Activated naive CD4-positive, alpha-beta T cell treated with anti-CD3 and anti-CD28 coated beads for 36 hours (primary cell): ENCODE measurements at regions of chr2 and their contacts with region 1.

Region 1: DNA sequence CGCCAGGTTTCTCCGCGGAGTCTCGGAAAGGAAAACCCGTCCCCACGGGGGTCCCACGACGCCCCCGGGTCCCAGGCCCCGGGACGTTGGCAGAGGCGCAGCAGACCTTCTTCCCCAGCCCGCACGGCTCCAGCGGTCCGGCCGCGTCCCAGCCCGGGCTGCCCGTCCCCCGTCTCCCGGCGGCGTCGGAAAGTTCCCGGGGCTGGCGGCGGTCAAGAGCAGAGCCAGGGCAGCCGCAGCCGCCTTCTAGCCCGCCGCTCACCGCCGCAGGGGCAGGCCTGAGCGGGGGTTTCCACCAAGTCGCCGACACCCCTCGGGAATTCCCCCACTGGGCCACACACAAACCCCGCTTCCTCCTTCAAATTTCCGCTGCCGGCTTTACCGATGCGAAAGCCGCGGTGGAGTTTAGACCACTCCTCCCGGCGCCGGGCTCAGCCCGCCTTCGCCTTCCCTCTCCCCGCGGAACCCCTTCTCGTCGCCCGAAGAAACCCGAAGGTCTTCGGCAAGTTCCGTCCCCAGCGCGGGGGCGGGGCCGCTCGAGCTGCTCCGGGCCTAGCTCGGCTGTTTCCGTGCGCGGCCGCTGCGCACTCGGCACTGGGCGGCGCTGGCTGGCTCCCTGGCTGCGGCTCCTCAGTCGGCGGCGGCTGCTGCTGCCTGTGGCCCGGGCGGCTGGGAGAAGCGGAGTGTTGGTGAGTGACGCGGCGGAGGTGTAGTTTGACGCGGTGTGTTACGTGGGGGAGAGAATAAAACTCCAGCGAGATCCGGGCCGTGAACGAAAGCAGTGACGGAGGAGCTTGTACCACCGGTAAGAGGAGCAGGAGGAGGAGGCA is at the start of gene CREB1:
- DNase-seq: peak; percentile 100
- H3K4me3 Mint-ChIP-seq: peak within 1 kb of the TSS; percentile 98
- H3K27ac Mint-ChIP-seq: peak within 1 kb of the TSS; percentile 100
- H3K4me1 Mint-ChIP-seq: peaks cover 59% of the 10 kb centered on the region
- H3K27me3 Mint-ChIP-seq: no peaks in the 10 kb centered on the region
- total RNA-seq, gene CREB1: 93.7 to 97.7 TPM

Region 2: GRCh38 chr2:207073801-207074678 is 455.5 kb before region 1 on chr2:
- CTCF ChIA-PET with region 1: no interaction called
- intact Hi-C with region 1: no loop called
- DNase-seq: peak; percentile 72
- H3K4me3 Mint-ChIP-seq: peak overlapping the region; percentile 64
- H3K27ac Mint-ChIP-seq: peak overlapping the region; percentile 85
- H3K4me1 Mint-ChIP-seq: peaks cover 27% of the 10 kb centered on the region
- H3K27me3 Mint-ChIP-seq: no peaks in the 10 kb centered on the region

Region 3: DNA sequence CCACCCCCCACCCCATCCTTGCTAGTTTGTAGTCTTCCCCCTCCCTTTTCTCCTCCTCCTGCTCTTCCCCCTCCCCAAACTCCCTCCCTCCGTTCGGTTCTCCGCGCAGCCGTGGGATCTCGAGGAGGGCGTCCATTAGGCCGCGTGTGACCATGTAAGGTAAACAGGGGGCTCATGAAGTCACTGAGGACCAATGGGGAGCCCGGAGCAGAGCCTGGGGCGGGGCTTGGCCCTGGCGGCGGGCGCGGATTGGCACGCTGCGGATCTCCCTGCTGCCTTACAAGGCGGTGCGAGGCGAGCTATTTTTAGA is 363.6 kb before region 1 on chr2:
- CTCF ChIA-PET with region 1: no interaction called
- intact Hi-C with region 1: loop called (anchors 1 kb)
- DNase-seq: peak; percentile 98
- H3K4me3 Mint-ChIP-seq: peak overlapping the region; percentile 95
- H3K27ac Mint-ChIP-seq: peak overlapping the region; percentile 96
- H3K4me1 Mint-ChIP-seq: peaks cover 43% of the 10 kb centered on the region
- H3K27me3 Mint-ChIP-seq: no peaks in the 10 kb centered on the region

Region 4: DNA sequence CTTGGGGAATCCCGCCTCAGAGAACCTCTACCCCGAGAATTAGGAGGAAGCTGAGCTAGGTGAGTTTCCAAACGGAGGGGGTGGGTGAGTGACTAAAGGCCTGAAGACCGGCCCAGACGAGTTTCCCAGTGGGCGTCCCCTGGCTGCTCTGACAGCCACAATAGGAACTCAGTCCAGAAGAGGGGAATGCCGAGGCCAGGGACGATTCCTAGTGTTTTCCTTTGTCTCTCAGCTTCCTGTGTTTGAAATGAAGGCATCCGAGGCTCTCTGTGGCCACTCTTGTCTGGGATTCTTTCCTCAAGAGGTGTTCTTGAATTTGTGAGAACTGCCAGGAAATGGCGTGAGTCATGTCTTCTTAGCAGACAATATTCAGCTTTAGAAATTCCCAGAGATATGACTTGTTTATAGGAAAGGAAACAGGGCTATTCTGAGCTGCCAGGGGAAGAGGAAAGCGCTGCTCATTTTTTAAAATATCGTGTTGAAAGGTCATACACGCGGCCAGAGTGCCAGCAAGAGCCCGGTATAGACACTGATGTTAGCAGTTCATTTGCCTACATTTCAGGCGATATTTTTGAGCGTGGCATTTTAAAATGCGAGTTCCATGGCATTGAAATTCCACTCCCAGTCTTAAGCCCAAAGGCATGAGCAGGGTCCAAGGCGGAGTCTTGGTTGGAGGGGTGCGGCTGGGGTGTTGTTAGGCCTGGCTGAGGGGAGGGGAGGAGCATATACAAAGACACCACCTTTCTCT is 194.7 kb before region 1 on chr2:
- CTCF ChIA-PET with region 1: no interaction called
- intact Hi-C with region 1: loop called (anchors 2 kb)
- DNase-seq: peak; percentile 63
- H3K4me3 Mint-ChIP-seq: no peak overlapping the region
- H3K27ac Mint-ChIP-seq: peak overlapping the region; percentile 84
- H3K4me1 Mint-ChIP-seq: peaks cover 71% of the 10 kb centered on the region
- H3K27me3 Mint-ChIP-seq: no peaks in the 10 kb centered on the region

Region 5: DNA sequence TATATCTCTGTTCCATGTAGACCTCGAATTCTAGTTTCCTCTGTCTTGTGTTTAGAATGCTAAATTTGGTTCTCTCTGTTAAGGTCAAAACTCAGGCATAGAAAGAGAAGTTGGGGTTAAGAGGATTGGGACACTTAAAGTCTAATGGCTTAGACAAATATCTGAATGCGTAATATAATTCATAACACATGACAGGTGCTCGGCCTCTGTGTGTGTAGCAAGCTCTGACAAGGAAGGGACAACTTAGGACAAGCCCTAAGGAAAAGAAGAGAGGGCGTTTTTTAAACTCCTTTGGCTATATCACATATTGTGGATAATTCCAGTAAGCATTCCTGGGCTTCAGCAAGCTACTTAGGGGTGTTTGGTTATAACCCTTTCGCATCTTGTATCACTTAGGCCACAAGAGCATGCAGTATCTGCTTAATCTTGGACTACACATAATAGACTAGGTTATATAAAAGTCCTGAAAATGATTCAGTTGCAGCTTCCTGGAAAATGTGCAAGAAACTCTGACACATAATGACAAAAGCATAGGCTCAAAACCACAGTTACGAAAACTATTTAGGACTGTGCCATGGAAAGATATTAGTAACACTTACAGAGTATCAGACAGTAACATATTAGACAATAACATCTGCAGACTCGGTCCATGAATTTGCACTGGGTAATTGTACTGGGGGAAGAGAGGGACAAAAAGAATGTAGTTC is 15.8 kb before region 1 on chr2:
- CTCF ChIA-PET with region 1: interaction called, 3 read pairs
- intact Hi-C with region 1: loop called (anchors 1 kb)
- DNase-seq: no peak
- H3K4me3 Mint-ChIP-seq: no peak overlapping the region
- H3K27ac Mint-ChIP-seq: peak overlapping the region; percentile 77
- H3K4me1 Mint-ChIP-seq: peaks cover 39% of the 10 kb centered on the region
- H3K27me3 Mint-ChIP-seq: no peaks in the 10 kb centered on the region

Region 6: GRCh38 chr2:208025037-208025813 is 495.7 kb after region 1 on chr2 and contains the start of gene PLEKHM3:
- CTCF ChIA-PET with region 1: no interaction called
- intact Hi-C with region 1: loop called (anchors 2 kb)
- DNase-seq: peak; percentile 81
- H3K4me3 Mint-ChIP-seq: peak within 1 kb of the TSS; percentile 93
- H3K27ac Mint-ChIP-seq: peak within 1 kb of the TSS; percentile 88
- H3K4me1 Mint-ChIP-seq: peaks cover 14% of the 10 kb centered on the region
- H3K27me3 Mint-ChIP-seq: no peaks in the 10 kb centered on the region
- total RNA-seq, gene PLEKHM3: 6.5 to 7.0 TPM